Activated T-helper 1 cell treated with anti-CD3 and anti-CD28 coated beads, Interleukin-12 subunit alpha, Interleukin-12 subunit beta, Interleukin-2, Interleukin-4 antibody, amounts not matched to agents 30 ng/mL and 10 ng/mL and 1 ng/mL, durations not matched to agents 14 hours and 24 hours and 36 hours (primary cell): ENCODE measurements at regions of chr19 and their contacts with region 1.

Region 1: DNA sequence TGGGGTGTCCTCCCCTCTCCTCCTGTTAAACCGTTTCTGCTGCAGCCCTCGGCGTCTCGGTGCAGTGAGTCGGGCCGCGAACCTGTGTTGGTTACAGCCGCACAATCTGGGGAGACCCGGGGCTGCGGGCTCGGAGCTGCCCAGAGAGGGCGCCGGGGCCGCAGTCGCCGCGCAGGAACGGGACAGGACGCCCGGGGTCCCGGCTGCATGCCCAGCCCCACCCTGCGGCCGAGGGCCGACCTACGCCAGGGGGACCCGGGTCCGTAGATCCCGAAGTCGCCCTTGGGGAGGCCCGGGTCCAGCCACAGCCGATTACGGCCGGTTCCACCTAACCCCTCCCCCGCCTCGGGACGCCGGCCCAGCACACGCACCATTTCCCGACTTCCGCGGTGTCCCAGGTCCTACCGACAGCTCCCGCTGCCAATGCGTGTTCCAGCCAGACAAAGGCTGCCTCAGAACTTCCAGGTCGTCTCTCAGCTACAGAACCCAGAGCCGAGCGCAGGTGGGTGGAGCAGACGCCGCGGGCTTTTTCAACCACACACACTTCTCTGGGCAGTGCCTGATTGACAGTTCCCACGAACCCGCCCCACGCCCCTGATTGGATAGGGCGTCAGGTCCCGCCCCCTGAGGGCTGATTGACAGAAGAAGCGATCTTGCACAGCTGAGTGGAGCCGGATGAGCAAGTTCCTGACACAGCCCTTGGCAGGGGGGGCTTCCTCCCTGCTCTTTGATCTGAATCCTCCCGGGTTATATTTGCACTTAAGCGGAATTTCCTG is at the start of gene ZNF443:
- DNase-seq: peak; percentile 98
- H3K4me3 Mint-ChIP-seq: peak within 1 kb of the TSS; percentile 100
- H3K27ac Mint-ChIP-seq: peak within 1 kb of the TSS; percentile 95
- H3K4me1 Mint-ChIP-seq: no peaks in the 10 kb centered on the region
- H3K27me3 Mint-ChIP-seq: no peaks in the 10 kb centered on the region
- total RNA-seq, gene ZNF443: 3.8 TPM in 2 replicates

Region 2: DNA sequence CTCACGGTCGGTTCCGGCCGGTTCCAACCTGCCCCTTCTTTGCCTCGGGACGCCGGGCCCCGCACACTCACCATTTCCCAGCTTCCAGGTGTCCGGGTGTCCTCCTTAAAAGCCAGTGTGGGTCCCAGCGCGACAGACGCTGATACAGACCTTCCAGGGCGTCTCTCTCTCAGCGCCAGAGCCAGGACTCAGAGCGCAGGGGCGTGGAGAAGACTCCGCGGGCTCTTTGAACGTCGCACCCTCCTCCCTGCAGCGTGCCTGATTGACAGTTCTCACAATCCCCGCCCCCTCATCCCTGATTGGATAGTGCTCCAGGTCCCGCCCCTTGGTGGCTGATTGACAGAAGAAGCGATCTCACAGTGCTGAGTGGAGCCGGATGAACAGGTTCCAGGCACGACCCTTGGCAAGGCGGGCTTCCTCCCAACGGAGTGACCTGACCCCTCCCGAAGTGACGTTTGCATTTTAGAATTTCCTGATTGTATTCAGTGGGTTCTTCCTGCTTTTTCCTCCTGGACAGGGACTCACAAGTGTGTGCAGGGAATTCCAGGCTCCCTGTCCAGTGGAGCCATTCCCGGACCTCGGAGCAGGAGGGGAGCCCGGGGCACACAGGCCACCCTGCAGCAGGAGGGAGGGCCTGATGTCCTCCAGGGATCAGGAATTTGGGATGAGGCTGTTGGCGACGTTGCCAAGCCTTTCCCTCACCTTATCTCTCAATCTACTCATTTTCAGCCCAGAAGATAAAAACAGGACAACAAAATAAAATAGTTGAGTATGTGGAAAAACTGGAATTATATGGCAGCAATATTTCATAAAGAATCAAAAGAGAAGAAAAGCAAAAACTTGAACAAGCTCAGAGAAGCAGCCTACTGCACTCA is 701.7 kb before region 1 on chr19 and contains the start of gene ZNF823:
- intact Hi-C with region 1: loop called (anchors 5 kb)
- DNase-seq: peak; percentile 91
- H3K4me3 Mint-ChIP-seq: peak within 1 kb of the TSS; percentile 98
- H3K27ac Mint-ChIP-seq: peak within 1 kb of the TSS; percentile 92
- H3K4me1 Mint-ChIP-seq: peaks cover 19% of the 10 kb centered on the region
- H3K27me3 Mint-ChIP-seq: peaks cover 3% of the 10 kb centered on the region
- total RNA-seq, gene ZNF823: 2.5 and 2.8 TPM in 2 replicates

Region 3: DNA sequence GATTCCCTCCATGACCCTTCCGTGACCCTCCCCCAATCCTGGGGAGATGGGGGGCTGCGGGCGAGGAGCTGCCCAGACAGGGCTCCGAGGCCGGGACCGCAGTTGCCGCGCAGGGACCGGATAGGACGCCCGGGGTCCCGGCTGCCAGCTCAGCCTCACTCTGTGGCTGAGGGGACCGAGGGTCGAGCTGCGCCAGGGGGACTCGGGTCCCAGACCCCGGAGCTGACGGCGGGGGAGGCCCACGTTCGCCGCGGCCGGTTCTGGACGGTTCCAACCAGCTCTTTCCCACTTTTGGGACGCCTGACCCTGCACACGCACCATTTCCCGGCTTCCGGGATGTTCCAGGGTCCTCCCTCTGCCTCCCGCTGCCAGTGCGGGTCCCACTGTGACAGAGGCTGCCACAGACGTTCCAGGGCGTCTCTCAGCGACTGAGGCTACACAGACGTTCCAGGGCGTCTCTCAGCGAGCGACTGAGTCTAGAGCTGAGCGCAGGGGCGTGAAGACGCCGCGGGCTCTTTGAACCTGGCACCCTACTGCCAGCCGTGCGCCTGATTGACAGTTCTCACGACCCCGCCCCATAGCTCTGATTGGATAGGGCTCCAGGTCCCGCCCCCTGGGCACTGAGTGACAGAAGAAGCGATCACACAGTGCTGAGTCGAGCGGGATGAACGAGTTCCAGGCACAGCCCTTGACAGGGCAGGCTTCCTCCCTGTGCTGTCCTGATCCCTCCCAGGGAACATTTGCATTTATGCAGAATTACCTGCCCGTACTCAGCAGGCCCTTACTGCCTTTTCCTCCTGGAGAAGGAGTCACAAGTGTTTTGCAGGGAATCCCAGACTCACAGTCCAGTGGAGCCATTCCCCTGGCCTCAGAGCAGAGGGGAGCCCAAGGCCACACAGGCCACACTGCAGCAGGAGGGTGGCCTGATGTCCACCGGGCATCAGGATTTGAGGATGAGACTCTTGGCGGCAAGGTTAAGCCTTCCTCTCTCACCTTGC is 107.3 kb before region 1 on chr19 and contains the start of gene ZNF563:
- intact Hi-C with region 1: loop called (anchors 1 kb)
- DNase-seq: peak; percentile 96
- H3K4me3 Mint-ChIP-seq: peak within 1 kb of the TSS; percentile 96
- H3K27ac Mint-ChIP-seq: peak within 1 kb of the TSS; percentile 96
- H3K4me1 Mint-ChIP-seq: peaks cover 38% of the 10 kb centered on the region
- H3K27me3 Mint-ChIP-seq: no peaks in the 10 kb centered on the region
- total RNA-seq, gene ZNF563: 1.4 and 2.5 TPM in 2 replicates

Region 4: DNA sequence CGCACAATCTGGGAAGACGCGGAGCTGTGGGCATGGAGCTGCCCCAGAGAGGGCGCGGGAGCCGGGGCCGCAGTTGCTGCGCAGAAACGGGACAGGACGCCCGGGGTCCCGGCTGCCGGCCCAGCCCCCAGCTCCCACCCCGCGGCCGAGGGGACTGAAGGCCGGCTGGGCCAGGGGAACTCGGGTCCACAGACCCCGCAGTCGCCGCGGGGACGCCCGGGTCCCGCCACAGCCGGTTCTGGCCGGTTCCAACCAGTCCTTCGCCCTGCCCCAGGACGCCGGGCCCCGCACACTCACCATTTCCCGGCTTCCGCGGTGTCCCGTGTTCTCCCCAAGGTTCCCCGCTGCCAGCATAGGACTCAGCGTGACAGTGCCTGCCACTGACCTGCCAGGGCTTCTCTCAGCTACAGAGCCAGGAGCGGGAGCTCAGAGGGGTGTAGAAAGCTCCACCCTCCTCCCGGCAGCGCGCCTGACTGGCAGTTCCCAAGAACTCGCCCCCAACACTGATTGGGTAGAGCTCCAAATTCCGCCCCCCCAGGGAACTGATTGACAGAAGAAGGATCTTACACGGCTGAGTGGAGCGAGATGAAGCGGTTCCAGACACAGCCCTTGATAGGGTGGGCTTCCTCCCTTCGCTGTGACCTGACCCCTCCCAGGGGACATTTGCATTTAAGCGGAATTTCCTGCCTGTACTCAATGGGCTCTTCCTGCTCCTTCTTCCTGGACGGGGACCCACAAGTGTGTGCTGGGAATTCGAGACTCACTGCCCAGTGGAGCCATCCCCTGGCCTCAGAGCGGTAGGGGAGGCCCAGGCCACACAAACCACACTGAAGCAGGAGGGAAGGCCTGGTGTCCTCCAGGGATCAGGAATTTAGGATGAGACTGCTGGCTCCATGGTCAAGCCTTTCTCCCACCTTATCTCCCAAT is 75.2 kb before region 1 on chr19 and contains the start of gene ZNF442:
- intact Hi-C with region 1: loop called (anchors 1 kb)
- DNase-seq: peak; percentile 58
- H3K4me3 Mint-ChIP-seq: peak within 1 kb of the TSS; percentile 91
- H3K27ac Mint-ChIP-seq: peak within 1 kb of the TSS; percentile 67
- H3K4me1 Mint-ChIP-seq: peaks cover 10% of the 10 kb centered on the region
- H3K27me3 Mint-ChIP-seq: peaks cover 2% of the 10 kb centered on the region
- total RNA-seq, gene ZNF442: 0.39 and 0.47 TPM in 2 replicates

Region 5: DNA sequence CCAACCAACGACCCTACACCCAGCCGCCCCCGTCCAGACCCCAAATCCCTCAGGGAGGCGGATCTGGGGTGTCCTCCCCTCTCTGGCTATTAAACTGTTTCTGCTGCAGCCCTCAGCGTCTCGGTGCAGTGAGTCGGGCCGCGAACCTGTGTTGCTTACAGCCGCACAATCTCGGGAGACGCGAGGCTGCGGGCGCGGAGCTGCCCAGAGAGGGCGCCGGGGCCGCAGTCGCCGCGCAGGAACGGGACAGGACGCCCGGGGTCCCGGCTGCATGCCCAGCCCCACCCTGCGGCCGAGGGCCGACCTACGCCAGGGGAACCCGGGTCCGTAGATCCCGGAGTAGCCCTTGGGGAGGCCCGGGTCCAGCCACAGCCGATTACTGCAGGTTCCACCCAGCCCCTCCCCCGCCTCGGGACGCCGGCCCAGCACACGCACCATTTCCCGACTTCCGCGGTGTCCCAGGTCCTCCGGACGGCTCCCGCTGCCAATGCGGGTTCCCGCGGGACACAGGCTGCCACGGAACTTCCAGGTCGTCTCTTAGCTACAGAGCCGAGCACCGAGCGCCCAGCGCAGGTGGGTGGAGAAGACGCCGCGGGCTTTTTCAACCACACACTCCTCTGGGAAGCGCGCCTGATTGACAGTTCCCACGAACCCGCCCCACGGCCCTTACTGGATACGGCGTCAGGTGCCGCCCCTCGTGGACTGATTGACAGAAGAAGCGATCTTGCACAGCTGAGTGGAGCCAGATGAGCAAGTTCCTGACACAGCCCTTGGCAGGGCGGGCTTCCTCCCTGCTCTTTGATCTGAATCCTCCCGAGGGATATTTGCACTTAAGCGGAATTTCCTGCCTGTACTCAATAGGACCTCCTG is 39.9 kb before region 1 on chr19 and contains the start of gene ZNF799:
- intact Hi-C with region 1: loop called (anchors 1 kb)
- DNase-seq: peak; percentile 81
- H3K4me3 Mint-ChIP-seq: peak within 1 kb of the TSS; percentile 93
- H3K27ac Mint-ChIP-seq: peak within 1 kb of the TSS; percentile 68
- H3K4me1 Mint-ChIP-seq: peaks cover 24% of the 10 kb centered on the region
- H3K27me3 Mint-ChIP-seq: no peaks in the 10 kb centered on the region
- total RNA-seq, gene ZNF799: 3.1 TPM in 2 replicates

Region 6: DNA sequence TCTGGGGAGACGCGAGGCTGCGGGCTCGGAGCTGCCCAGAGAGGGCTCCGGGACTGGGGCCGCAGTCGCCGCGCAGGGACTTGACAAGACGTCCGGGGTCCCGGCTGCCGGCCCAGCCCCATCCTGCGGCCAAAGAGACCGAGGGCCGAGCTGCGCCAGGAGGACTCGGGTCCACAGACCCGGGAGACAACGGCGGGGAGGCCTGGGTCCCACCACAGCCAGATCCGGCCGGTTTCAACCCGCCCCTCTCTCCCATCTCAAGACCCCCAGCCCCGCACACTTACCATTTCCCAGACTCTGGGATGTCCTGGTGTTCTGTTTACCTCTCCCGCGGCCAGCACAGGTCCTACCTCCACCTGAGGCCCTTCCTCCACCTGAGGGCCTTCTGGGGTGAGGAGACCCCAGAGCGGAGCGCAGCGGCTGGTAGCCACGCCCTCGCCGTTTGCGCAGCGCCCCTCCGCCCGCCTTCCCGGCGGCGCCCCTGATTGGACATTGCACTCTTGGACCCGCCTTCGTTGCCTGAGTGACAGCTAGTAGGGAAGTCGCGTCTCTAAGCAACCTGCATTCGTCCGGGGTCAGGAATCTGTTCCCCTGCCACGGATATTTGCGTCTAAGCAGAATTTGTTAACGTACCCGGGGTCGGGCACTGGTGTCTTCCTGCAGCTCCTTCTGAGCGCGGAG is 43.8 kb after region 1 on chr19 and contains the start of gene ZNF709:
- intact Hi-C with region 1: loop called (anchors 1 kb)
- DNase-seq: peak; percentile 79
- H3K4me3 Mint-ChIP-seq: peak within 1 kb of the TSS; percentile 91
- H3K27ac Mint-ChIP-seq: peak within 1 kb of the TSS; percentile 35
- H3K4me1 Mint-ChIP-seq: peaks cover 27% of the 10 kb centered on the region
- H3K27me3 Mint-ChIP-seq: no peaks in the 10 kb centered on the region
- total RNA-seq, gene ZNF709: 0.26 TPM in 1 of 2 replicates, not detected in the other

Region 7: DNA sequence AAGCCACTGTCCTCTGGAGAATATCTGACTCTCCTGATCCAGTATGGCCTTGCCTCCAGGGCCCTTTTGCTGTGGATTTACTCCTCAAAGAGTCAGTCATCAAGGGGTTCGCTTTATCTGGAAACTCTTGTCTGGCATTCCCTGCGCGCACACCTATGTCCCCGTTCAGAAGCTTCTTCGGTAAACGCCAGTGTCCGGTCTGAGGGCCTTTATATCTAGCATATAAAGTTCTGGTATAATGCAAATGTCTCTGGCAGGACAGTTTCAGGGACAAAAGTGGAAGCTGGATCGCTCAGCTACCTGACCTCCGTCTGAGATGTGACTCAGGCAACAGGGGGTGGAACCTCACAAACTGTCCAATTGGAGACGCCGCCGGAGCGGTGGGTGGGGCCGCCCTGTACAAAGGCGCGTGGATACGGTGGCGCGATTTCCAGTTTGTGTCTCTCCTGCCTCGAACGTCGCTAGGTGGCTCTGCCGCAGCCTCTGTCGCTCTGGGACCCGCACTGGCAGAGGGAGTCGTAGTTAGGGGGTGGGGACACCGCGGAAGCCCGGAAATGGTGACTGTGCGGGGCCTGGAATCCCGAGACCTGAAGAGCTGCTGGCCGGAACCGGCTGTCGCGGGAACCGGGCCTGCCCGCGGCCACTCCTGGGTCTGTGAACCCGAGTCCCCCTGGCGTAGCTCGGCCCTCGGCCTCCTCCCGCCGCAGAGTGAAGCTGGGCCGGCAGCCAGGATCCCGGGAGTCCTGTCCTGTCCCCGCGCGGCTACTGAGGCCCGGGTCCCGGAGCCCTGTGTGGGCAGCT is 54.5 kb after region 1 on chr19:
- intact Hi-C with region 1: loop called (anchors 2 kb)
- DNase-seq: peak; percentile 78
- H3K4me3 Mint-ChIP-seq: peak overlapping the region; percentile 83
- H3K27ac Mint-ChIP-seq: peak overlapping the region; percentile 52
- H3K4me1 Mint-ChIP-seq: peaks cover 6% of the 10 kb centered on the region
- H3K27me3 Mint-ChIP-seq: peaks cover 2% of the 10 kb centered on the region